ENCODE measurements at regions of chr4 and their contacts with region 1.

Region 1: DNA sequence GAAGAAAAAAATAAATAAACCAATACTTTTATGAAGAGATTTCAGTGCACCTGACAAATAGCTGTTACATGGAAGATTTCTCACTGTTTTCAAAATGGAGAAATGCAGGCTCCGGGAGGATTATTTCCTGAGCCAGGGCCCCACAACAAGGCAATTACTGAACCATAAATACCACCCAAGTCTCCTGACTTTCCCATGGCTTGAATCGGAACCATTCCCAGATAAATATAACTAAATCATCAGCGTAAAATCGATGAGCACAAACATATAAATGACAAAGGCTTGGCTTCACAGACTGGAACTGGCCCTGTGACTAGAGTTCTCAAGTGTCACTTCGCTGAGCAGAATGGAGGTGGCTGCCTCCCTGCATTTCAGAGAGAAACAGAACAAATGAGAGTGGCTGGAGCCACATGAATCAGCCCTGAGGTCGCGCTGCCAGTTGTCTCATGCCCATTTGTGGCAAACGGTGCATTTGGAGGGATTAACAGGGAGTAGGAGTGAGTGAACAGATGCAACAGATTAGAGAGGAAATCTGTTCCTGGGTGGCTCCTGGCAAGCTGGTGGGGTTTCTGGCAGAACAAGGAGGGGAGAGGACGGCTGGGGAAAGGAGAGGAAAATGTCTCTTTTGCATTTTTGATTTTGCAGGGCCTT is 57.3 kb upstream of the STIM2 start:
- DNase-seq: no peak
- ATAC-seq: no peak
- H3K4me3 ChIP-seq: no peak overlapping the region
- H3K4me3 Mint-ChIP-seq: no peak overlapping the region
- H3K27ac ChIP-seq: no peak overlapping the region
- H3K27ac Mint-ChIP-seq: no peak overlapping the region
- H3K4me1 ChIP-seq: no peaks in the 10 kb centered on the region
- H3K4me1 Mint-ChIP-seq: no peaks in the 10 kb centered on the region
- H3K27me3 ChIP-seq: no peaks in the 10 kb centered on the region
- H3K27me3 Mint-ChIP-seq: peaks cover 2% of the 10 kb centered on the region
- CTCF ChIP-seq: no peak

Region 2: DNA sequence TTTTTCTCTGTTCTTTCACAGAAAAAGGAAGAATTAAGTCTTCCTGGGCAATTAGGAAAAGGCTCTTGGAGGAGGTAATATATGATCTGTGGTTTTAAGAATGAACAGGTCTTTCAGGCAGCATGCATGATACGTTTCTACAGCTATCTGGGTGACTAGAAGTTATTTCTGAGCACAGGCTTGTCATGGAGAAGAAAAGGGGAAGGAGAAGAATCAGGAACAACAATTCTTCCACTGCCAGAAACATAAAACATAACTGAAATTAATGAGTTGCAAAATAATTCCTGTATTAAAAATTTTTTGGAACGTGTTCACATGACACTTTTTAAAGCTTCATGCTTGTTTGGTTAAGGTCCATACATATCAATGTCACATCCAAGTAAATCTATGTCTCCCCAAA is 39.6 kb after region 1 on chr4:
- CTCF ChIA-PET with region 1: no interaction called
- POLR2A ChIA-PET with region 1: no interaction called
- intact Hi-C with region 1: loop called in 1 of 2 experiments (anchors 5 kb)
- DNase-seq: no peak
- ATAC-seq: no peak
- H3K4me3 ChIP-seq: no peak overlapping the region
- H3K4me3 Mint-ChIP-seq: no peak overlapping the region
- H3K27ac ChIP-seq: no peak overlapping the region
- H3K27ac Mint-ChIP-seq: no peak overlapping the region
- H3K4me1 ChIP-seq: no peaks in the 10 kb centered on the region
- H3K4me1 Mint-ChIP-seq: peaks cover 8% of the 10 kb centered on the region
- H3K27me3 ChIP-seq: no peaks in the 10 kb centered on the region
- H3K27me3 Mint-ChIP-seq: no peaks in the 10 kb centered on the region
- CTCF ChIP-seq: no peak